CD14-positive monocyte (primary cell): ENCODE measurements at regions of chr10 and their contacts with region 1.

Region 1: DNA sequence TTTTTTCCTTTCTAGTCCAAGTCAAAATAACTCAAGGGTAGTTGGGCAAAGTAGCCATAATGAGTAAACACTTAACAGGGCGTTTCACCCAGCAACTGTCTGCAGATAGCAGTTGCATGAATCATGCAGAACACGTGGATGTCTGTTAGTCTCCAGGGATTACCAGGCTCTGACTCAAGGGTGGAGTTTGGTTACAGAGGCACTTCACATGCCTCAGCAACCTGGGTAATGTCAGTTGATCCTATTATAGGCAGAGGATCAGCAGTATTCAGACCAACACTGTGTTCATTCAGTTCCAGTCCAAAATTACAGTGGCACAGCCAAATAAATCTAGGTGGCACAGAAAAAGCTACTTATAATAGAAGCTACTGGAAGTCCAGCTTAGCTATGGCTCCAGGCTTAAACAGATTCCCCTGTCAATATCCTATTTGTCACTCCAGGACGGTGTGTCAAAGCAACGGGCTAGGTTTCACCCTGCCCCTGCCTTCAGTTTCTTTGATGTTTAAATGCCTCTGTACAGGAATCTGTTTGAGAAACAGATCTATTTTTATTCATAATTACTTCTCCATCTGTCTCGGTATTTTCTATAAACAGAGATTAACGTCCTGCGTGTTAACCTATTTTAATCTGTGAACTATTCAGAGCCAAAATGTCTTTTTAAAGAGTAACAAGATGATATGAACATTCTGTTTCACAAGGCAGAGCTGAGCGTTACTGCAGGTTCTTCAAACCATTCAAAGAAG is 162.7 kb upstream of the AKR1E2 start:
- DNase-seq: peak; percentile 16 to 60 (median 21)
- H3K4me3 ChIP-seq: no peak overlapping the region
- H3K4me3 Mint-ChIP-seq: no peak overlapping the region
- H3K27ac ChIP-seq: no peak overlapping the region
- H3K27ac Mint-ChIP-seq: no peak overlapping the region
- H3K4me1 ChIP-seq: no peaks in the 10 kb centered on the region
- H3K4me1 Mint-ChIP-seq: no peaks in the 10 kb centered on the region
- H3K27me3 ChIP-seq: no peaks in the 10 kb centered on the region
- H3K27me3 Mint-ChIP-seq: peaks cover 1 to 5% (median 4%) of the 10 kb centered on the region in 3 donors
- CTCF ChIP-seq: no peak

Region 2: GRCh38 chr10:3197348-3198003 is 1465.9 kb before region 1 on chr10:
- intact Hi-C with region 1: loop called in 1 of 2 experiments (anchors 5 kb)
- DNase-seq: peak in 2 of 3 donors; percentile 28 to 35
- H3K4me3 ChIP-seq: no peak overlapping the region
- H3K4me3 Mint-ChIP-seq: peak overlapping the region in 1 of 2 donors; percentile 76
- H3K27ac ChIP-seq: no peak overlapping the region
- H3K27ac Mint-ChIP-seq: peak overlapping the region in 2 of 7 donors; percentile 6 to 53
- H3K4me1 ChIP-seq: peaks cover 4 to 8% of the 10 kb centered on the region in 2 donors
- H3K4me1 Mint-ChIP-seq: peaks cover 8% of the 10 kb centered on the region
- H3K27me3 ChIP-seq: peaks cover 5 to 21% of the 10 kb centered on the region in 2 donors
- H3K27me3 Mint-ChIP-seq: peaks cover 29 to 36% (median 35%) of the 10 kb centered on the region in 3 donors
- CTCF ChIP-seq: peak; percentile 66

Region 3: DNA sequence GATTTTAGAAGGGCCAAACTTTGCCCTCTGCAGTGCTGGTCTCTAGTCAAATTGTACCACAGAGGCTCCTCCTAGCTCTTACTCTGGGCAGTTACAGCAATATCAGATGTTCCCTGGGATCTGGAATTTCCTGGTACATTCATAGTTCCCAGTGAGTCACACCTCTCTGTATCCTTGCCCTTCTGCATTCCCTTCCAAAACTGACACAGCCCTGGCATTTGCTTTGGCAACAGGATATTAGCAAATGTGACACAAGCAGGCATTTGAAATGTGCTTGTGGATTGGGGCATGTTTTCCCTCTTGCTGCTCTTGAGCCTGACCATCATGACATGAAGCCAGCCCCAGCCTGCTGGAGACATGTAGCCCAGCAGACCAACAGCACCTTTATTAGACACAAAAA is 122.0 kb before region 1 on chr10:
- intact Hi-C with region 1: no loop called
- DNase-seq: peak in 1 of 3 donors; percentile 46
- H3K4me3 ChIP-seq: no peak overlapping the region
- H3K4me3 Mint-ChIP-seq: no peak overlapping the region
- H3K27ac ChIP-seq: no peak overlapping the region
- H3K27ac Mint-ChIP-seq: peak overlapping the region in 1 of 7 donors; percentile 79
- H3K4me1 ChIP-seq: peaks cover 5 to 6% of the 10 kb centered on the region in 2 donors
- H3K4me1 Mint-ChIP-seq: peaks cover 12% of the 10 kb centered on the region
- H3K27me3 ChIP-seq: no peaks in the 10 kb centered on the region
- H3K27me3 Mint-ChIP-seq: peaks cover 0 to 3% (median 0%) of the 10 kb centered on the region in 3 donors
- CTCF ChIP-seq: no peak